ENCODE measurements at regions of chr2 and their contacts with region 1.

Region 1: GRCh38 chr2:65710779-65711295 is 278.4 kb upstream of the SPRED2 start:
- DNase-seq: peak; percentile 38
- H3K4me3 ChIP-seq: no peak overlapping the region
- H3K27ac ChIP-seq: no peak overlapping the region
- H3K4me1 ChIP-seq: no peaks in the 10 kb centered on the region
- CTCF ChIP-seq: peak; percentile 73

Region 2: GRCh38 chr2:65640793-65641103 is 70.1 kb before region 1 on chr2:
- CTCF ChIA-PET with region 1: interaction called, 3 read pairs
- POLR2A ChIA-PET with region 1: no interaction called
- intact Hi-C with region 1: loop called (anchors 5 kb)
- DNase-seq: no peak
- H3K4me3 ChIP-seq: no peak overlapping the region
- H3K27ac ChIP-seq: no peak overlapping the region
- H3K4me1 ChIP-seq: no peaks in the 10 kb centered on the region
- CTCF ChIP-seq: peak; percentile 22; the same call in 1 of the 2 replicates

Region 3: GRCh38 chr2:65754219-65754618 is 43.4 kb after region 1 on chr2:
- CTCF ChIA-PET with region 1: no interaction called
- POLR2A ChIA-PET with region 1: no interaction called
- intact Hi-C with region 1: no loop called
- DNase-seq: no peak
- H3K4me3 ChIP-seq: no peak overlapping the region
- H3K27ac ChIP-seq: no peak overlapping the region
- H3K4me1 ChIP-seq: no peaks in the 10 kb centered on the region
- CTCF ChIP-seq: no peak

Region 4: GRCh38 chr2:66105066-66105753 is 394.4 kb after region 1 on chr2:
- CTCF ChIA-PET with region 1: no interaction called
- POLR2A ChIA-PET with region 1: no interaction called
- intact Hi-C with region 1: no loop called
- DNase-seq: no peak
- H3K4me3 ChIP-seq: no peak overlapping the region
- H3K27ac ChIP-seq: no peak overlapping the region
- H3K4me1 ChIP-seq: no peaks in the 10 kb centered on the region
- CTCF ChIP-seq: no peak

Measured in OCI-LY7 (cell line).